Posterior vena cava (tissue), 2 donors: ENCODE measurements at regions of chr6 and their contacts with region 1.

Region 1: DNA sequence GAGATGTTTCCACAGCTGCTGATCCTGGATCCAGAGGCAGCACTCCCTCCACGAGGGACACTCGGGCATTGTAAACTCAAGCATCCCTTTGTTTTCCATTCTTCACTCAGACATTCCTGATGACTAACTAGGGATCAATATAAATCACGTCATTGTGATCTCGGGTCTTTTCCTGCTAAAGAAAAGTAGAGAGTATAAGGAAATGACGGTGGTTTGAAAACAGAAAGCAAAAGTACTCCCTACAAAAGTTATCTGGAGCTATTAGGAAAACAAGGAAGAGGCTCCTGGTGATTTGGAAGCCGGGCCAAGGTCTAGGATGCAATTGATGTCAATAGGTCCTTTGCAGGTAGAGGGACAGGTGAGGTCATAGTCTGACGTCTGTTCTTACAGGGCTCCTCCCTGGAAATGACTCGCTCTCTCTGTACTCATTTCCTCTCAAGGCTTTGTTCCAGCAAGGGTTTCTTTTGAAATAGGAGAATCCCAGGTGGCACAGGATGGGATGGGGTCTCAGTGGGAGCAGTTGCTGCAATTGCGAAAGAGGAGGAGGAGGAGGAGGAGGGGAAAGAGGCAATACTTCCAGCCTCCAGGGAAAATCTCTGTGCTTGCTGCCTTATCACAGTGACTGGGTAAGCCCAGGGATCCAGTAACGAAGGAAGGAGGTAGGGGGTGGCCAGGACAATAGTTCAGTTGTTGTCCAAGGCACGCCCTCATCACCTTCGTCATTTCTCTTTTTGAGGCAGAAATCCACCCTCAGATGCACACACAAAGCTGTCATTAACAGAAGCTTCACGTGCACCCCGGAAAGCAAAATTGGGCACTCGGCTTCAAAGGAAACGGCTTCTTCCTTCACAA is 222.9 kb downstream of the LY86 start:
- DNase-seq: no peak

Region 2: DNA sequence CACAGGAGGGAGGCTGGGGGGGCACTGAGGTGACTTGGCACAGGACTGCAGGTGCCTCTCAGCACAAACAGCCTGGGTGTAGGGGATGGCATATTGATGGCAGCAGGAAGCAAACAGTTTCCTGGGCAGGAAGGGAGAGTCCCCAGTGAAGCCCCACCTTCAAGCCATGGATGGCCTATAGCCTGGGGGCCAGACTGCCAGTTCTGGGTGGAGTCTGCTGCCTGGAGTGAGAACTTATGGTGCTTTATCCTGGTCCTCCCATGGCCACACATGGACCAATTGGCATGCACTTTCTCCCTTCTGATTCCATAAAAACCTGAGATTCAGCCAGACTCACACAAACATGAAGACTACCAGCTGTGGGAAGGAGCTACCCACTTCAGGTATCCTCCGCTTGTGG is 689.4 kb before region 1 on chr6:
- intact Hi-C with region 1: no loop called
- DNase-seq: peak; percentile 52

Region 3: GRCh38 chr6:6843057-6843638 is 31.8 kb after region 1 on chr6:
- intact Hi-C with region 1: loop called in 1 of 2 experiments (anchors 1 kb)
- DNase-seq: no peak